ENCODE measurements at regions of chr19 and their contacts with region 1.

Region 1: GRCh38 chr19:14517840-14518505 is at the start of gene DNAJB1:
- DNase-seq: peak; percentile 73
- H3K4me3 Mint-ChIP-seq: peak within 1 kb of the TSS; percentile 91
- H3K27ac Mint-ChIP-seq: peak within 1 kb of the TSS; percentile 94
- H3K4me1 Mint-ChIP-seq: peaks cover 60% of the 10 kb centered on the region
- H3K27me3 Mint-ChIP-seq: peaks cover 2% of the 10 kb centered on the region
- total RNA-seq, gene DNAJB1: 104 and 120 TPM in 2 replicates

Region 2: DNA sequence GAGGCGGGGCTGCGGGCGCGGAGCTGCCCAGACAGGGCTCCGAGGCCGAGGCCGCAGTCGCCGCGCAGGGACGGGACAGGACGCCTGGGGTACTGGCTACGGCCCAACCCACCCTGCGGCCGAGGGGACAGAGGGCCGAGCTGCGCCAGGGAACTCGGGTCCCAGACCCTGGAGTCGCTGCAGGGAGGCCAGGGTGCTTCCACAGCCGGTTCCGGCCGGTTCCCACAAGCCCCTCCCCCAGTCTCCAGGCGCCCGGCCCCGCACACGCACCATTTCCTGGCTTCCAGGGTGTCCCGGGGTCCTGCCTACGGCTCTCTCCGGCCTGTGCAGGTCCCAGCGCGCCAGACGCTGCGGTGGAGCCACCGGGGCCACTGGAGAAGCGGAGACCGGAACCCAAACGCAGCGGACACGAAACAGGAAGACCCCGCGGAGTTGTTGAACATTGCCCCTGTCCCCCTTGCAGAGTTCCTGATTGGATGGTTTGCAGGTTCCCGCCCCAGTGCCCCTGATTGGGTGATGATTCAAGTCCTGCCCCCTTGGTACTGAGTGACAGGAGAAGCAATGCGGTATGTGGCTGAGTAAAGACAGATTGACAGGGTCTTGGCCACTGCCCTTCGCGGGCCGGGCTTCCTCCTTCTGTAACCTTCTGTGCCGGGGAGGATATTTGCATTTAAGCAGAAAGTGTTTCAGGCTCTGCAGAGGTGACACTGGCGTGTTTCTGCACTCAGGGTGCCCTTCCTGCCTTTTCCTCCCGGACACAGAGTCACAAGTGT is 1966.7 kb before region 1 on chr19 and contains the start of gene ZNF564:
- intact Hi-C with region 1: no loop called
- DNase-seq: peak; percentile 92
- H3K4me3 Mint-ChIP-seq: peak within 1 kb of the TSS; percentile 95
- H3K27ac Mint-ChIP-seq: peak within 1 kb of the TSS; percentile 91
- H3K4me1 Mint-ChIP-seq: peaks cover 20% of the 10 kb centered on the region
- H3K27me3 Mint-ChIP-seq: no peaks in the 10 kb centered on the region
- total RNA-seq, gene ZNF564: 7.4 and 8.3 TPM in 2 replicates

Region 3: GRCh38 chr19:14496028-14496833 is 21.7 kb before region 1 on chr19 and contains the start of gene GIPC1:
- intact Hi-C with region 1: loop called (anchors 2 kb)
- DNase-seq: peak; percentile 86
- H3K4me3 Mint-ChIP-seq: peak within 1 kb of the TSS; percentile 87
- H3K27ac Mint-ChIP-seq: peak within 1 kb of the TSS; percentile 65
- H3K4me1 Mint-ChIP-seq: peaks cover 12% of the 10 kb centered on the region
- H3K27me3 Mint-ChIP-seq: no peaks in the 10 kb centered on the region
- total RNA-seq, gene GIPC1: 42.9 and 43.7 TPM in 2 replicates

Region 4: GRCh38 chr19:14507705-14508246 is 10.2 kb before region 1 on chr19:
- intact Hi-C with region 1: loop called (anchors 1 kb)
- DNase-seq: no peak
- H3K4me3 Mint-ChIP-seq: no peak overlapping the region
- H3K27ac Mint-ChIP-seq: peak overlapping the region; percentile 81
- H3K4me1 Mint-ChIP-seq: peaks cover 43% of the 10 kb centered on the region
- H3K27me3 Mint-ChIP-seq: peaks cover 9% of the 10 kb centered on the region

Region 5: DNA sequence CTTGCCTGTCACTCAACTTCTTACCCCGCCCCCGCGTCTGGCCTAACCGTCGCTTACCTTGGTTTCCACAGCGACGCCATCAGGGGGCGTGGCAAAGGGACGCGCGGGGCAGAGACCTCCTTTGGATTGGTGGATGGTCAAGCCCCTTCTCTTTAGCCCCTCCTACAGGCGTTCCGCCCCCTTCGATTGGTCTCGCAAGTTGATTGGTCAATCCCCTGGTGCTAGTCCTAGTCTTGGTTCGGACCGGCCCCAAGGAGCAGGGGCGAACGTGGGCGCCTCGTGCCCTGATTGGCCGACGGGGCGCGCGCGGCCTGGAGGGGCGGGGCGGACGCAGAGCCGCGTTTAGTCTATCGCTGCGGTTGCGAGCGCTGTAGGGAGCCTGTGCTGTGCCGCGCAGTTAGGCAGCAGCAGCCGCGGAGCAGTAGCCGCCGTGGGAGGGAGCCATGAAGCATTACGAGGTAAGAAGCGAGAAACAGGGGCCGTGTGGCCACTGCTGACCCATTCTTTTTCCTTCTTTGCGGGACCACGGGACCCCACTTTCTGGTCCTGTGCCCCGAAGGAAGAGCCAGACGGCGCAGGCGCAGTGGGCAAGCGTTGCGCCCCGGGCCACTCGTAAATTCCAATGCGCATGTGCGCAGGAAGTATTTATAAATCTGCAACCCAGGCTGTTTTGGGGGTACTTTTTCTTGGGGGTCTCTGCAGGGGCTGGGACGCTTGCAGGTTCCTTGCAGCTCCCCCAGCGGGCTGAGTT is 11.5 kb after region 1 on chr19 and contains the start of gene TECR:
- intact Hi-C with region 1: loop called (anchors 1 kb)
- DNase-seq: peak; percentile 100
- H3K4me3 Mint-ChIP-seq: peak within 1 kb of the TSS; percentile 96
- H3K27ac Mint-ChIP-seq: peak within 1 kb of the TSS; percentile 97
- H3K4me1 Mint-ChIP-seq: peaks cover 13% of the 10 kb centered on the region
- H3K27me3 Mint-ChIP-seq: no peaks in the 10 kb centered on the region
- total RNA-seq, gene TECR: 110 and 120 TPM in 2 replicates

Region 6: DNA sequence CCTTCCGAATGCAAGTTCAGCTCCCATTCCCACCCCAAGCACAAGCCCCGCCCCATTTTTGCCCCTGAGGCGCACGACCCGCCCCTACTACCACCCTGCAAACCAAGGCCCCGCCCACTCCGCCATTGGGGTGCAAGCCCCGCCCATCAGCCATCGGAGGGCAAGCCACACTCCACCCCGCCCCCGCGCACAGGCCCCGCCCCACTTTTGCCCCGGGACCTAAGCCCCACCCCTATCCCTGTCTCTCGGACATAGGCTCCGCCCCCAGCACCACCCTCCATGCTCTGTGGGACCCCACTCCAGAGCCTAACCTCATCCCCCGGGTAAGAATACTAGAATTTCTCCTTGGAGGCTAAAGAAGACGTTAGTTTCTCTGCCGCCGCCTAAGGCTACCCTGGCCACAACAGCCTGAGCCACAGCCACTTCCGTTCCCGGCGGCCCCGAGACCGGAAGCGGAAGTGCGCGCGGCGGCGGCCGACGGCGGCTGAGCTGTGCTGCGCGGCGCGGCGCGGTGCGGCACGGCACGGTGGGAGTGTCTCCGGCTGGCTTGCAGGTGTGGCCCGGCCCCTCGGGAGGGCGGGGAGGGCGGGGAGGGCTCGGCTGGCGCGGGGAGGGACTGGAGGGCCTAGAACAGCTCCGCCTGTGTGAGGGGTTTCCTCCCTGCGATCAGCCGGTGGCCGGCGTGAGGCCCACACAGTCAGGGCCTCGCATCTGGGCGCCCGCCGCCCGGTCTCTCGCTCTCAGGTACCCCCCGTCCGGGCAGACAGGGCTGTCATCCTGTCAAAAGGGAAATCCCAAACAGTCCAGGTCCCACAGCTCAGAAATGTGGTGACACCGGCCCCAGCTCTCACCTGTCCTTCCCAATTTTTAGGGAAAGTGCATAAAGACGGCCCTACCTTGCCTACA is 171.9 kb after region 1 on chr19 and contains the start of gene ZNF333:
- intact Hi-C with region 1: loop called (anchors 1 kb)
- DNase-seq: peak; percentile 94
- H3K4me3 Mint-ChIP-seq: peak within 1 kb of the TSS; percentile 93
- H3K27ac Mint-ChIP-seq: peak within 1 kb of the TSS; percentile 99
- H3K4me1 Mint-ChIP-seq: peaks cover 16% of the 10 kb centered on the region
- H3K27me3 Mint-ChIP-seq: peaks cover 3% of the 10 kb centered on the region
- total RNA-seq, gene ZNF333: 10.0 and 11.1 TPM in 2 replicates